Caco-2 (cell line): ENCODE measurements at regions of chr18 and their contacts with region 1.

Region 1: GRCh38 chr18:55470826-55471225 is 117.2 kb downstream of the TCF4 start:
- DNase-seq: no peak
- H3K4me3 ChIP-seq: no peak overlapping the region
- H3K4me3 Mint-ChIP-seq: no peak overlapping the region
- H3K27ac Mint-ChIP-seq: no peak overlapping the region
- H3K4me1 ChIP-seq: peaks cover 8% of the 10 kb centered on the region
- H3K4me1 Mint-ChIP-seq: peaks cover 7% of the 10 kb centered on the region
- H3K27me3 ChIP-seq: no peaks in the 10 kb centered on the region
- H3K27me3 Mint-ChIP-seq: no peaks in the 10 kb centered on the region
- CTCF ChIP-seq: no peak

Region 2: DNA sequence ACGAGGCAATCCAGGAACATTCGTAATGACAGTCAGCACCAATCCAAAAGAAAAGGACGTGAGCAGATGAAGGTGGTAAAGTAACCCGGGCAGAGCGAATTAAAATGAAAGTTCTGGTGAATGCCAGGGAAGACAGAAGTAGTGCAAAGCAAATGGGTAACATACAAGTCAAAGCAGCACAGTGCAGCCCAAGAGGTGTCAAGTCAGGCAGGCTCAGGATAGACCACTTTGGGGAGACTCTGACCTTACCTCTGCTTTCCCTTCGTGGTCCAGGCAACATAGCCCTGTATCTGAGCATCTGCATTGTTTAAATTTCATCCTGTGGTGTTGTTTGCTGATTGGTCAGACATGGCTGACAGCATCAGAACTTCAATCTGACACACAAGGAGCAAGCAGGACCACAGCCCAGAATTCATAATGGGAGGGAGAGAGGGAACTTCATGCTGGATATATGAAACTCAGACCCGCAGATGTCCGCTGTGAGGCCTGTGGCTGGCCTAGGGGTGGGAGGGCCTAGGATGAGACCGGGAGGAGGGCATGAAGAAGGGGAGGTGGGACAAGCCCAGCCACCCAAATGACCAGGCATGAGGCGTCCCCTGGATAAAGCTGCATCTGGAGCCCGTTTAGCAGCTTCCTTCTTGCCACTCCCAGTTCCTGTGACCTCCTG is 168.5 kb before region 1 on chr18:
- CTCF ChIA-PET with region 1: no interaction called
- POLR2A ChIA-PET with region 1: no interaction called
- intact Hi-C with region 1: no loop called
- DNase-seq: no peak
- H3K4me3 ChIP-seq: no peak overlapping the region
- H3K4me3 Mint-ChIP-seq: no peak overlapping the region
- H3K27ac Mint-ChIP-seq: no peak overlapping the region
- H3K4me1 ChIP-seq: no peaks in the 10 kb centered on the region
- H3K4me1 Mint-ChIP-seq: no peaks in the 10 kb centered on the region
- H3K27me3 ChIP-seq: no peaks in the 10 kb centered on the region
- H3K27me3 Mint-ChIP-seq: no peaks in the 10 kb centered on the region
- CTCF ChIP-seq: no peak

Region 3: GRCh38 chr18:55483266-55483871 is 12.5 kb after region 1 on chr18:
- CTCF ChIA-PET with region 1: no interaction called
- POLR2A ChIA-PET with region 1: interaction called, 10 read pairs
- intact Hi-C with region 1: no loop called
- DNase-seq: no peak
- H3K4me3 ChIP-seq: no peak overlapping the region
- H3K4me3 Mint-ChIP-seq: no peak overlapping the region
- H3K27ac Mint-ChIP-seq: no peak overlapping the region
- H3K4me1 ChIP-seq: no peaks in the 10 kb centered on the region
- H3K4me1 Mint-ChIP-seq: no peaks in the 10 kb centered on the region
- H3K27me3 ChIP-seq: no peaks in the 10 kb centered on the region
- H3K27me3 Mint-ChIP-seq: no peaks in the 10 kb centered on the region
- CTCF ChIP-seq: no peak